Activated CD4-positive, alpha-beta T cell treated with anti-CD3 and anti-CD28 coated beads for 36 hours (primary cell): ENCODE measurements at regions of chr9 and their contacts with region 1.

Region 1: DNA sequence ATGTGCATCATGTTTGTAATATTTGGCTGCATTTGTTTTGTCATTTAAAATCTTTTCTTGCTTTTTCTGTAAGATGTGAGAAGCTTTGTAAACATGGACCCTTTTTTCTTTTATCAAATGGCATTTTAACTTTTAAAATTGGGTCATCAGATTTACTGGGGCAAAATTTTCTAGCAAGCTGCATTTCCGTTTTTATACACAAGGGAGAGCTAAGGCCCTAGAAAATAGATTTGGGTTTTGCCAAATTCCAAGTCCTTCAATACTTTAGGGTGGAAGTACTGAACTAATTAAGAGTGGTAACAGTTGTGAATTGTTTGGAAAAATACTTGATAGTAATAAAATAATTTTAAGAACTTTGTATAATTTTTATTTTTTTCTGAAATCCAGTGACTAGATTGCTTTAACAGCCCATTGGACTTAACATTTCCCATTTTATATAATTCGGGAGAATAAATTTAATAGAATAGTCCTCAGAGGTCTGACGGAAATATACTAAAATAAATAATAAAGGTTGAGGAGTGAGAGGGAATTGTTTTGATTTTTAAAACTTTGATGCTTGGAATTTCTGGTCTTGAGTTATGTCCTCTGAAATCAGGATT is 117.4 kb downstream of the SMARCA2 start:
- DNase-seq: no peak
- ATAC-seq: no peak
- H3K4me3 Mint-ChIP-seq: no peak overlapping the region
- H3K27ac Mint-ChIP-seq: no peak overlapping the region
- H3K4me1 Mint-ChIP-seq: peaks cover 19% of the 10 kb centered on the region
- H3K27me3 Mint-ChIP-seq: no peaks in the 10 kb centered on the region

Region 2: DNA sequence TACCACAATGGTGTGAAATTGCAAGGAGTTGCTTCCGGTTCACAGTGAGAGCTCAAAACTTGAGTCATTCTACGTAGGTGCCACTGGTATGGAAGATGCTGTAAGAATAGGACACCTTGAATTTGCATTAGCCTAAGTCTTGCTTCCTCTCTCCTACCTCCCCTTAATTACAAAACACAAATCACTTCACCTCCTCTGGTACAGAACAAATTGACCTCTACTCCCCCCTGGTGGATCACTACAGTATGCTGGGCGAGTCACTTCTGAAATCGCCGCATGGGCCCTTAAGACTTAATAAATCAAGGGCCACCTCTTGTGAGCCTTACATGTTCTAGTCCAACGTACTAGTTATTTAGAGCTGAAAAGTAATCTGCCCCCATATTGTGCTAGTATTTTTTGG is 262.7 kb before region 1 on chr9:
- CTCF ChIA-PET with region 1: no interaction called
- POLR2A ChIA-PET with region 1: no interaction called
- intact Hi-C with region 1: no loop called
- DNase-seq: peak; percentile 61
- ATAC-seq: peak; percentile 88
- H3K4me3 Mint-ChIP-seq: no peak overlapping the region
- H3K27ac Mint-ChIP-seq: no peak overlapping the region
- H3K4me1 Mint-ChIP-seq: peaks cover 14% of the 10 kb centered on the region
- H3K27me3 Mint-ChIP-seq: peaks cover 36% of the 10 kb centered on the region

Region 3: DNA sequence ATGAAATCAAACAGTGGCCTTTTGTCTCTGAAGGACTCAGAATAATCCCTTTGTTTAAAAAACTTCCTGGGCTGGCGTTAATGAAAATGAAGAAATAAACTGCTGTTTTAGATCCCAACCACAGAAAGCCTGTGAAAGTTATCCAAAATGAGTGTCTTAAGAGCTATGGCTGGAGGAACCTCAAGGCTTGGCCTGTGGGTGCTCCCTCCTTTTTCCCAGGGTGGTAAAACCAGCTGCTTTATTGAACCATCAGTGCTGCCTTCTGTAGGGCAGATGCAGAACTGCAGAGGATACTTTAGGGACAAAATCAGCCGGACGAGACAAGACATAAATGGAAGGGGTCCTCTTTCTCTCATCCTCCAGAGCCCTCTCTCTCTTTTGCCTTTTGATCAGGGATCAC is 16.5 kb before region 1 on chr9:
- CTCF ChIA-PET with region 1: interaction called, 20 read pairs
- POLR2A ChIA-PET with region 1: no interaction called
- intact Hi-C with region 1: no loop called
- DNase-seq: peak; percentile 30
- ATAC-seq: no peak
- H3K4me3 Mint-ChIP-seq: no peak overlapping the region
- H3K27ac Mint-ChIP-seq: no peak overlapping the region
- H3K4me1 Mint-ChIP-seq: no peaks in the 10 kb centered on the region
- H3K27me3 Mint-ChIP-seq: no peaks in the 10 kb centered on the region

Region 4: GRCh38 chr9:2158111-2158610 is 25.6 kb after region 1 on chr9:
- CTCF ChIA-PET with region 1: interaction called, 11 read pairs
- POLR2A ChIA-PET with region 1: no interaction called
- intact Hi-C with region 1: no loop called
- DNase-seq: peak; percentile 54
- ATAC-seq: peak; percentile 70
- H3K4me3 Mint-ChIP-seq: peak overlapping the region; percentile 81
- H3K27ac Mint-ChIP-seq: peak overlapping the region; percentile 99
- H3K4me1 Mint-ChIP-seq: peaks cover 58% of the 10 kb centered on the region
- H3K27me3 Mint-ChIP-seq: no peaks in the 10 kb centered on the region

Region 5: GRCh38 chr9:2181792-2182191 is 49.2 kb after region 1 on chr9:
- CTCF ChIA-PET with region 1: interaction called, 47 read pairs
- POLR2A ChIA-PET with region 1: no interaction called
- intact Hi-C with region 1: loop called (anchors 1 to 2 kb)
- DNase-seq: peak; percentile 49
- ATAC-seq: no peak
- H3K4me3 Mint-ChIP-seq: no peak overlapping the region
- H3K27ac Mint-ChIP-seq: no peak overlapping the region
- H3K4me1 Mint-ChIP-seq: no peaks in the 10 kb centered on the region
- H3K27me3 Mint-ChIP-seq: no peaks in the 10 kb centered on the region

Region 6: GRCh38 chr9:2837915-2838314 is 705.3 kb after region 1 on chr9:
- CTCF ChIA-PET with region 1: no interaction called
- POLR2A ChIA-PET with region 1: no interaction called
- intact Hi-C with region 1: loop called in 1 of 2 experiments (anchors 10 kb)
- DNase-seq: no peak
- ATAC-seq: no peak
- H3K4me3 Mint-ChIP-seq: no peak overlapping the region
- H3K27ac Mint-ChIP-seq: peak overlapping the region; percentile 77
- H3K4me1 Mint-ChIP-seq: peaks cover 15% of the 10 kb centered on the region
- H3K27me3 Mint-ChIP-seq: no peaks in the 10 kb centered on the region